ENCODE measurements at regions of chrX and their contacts with region 1.

Region 1: DNA sequence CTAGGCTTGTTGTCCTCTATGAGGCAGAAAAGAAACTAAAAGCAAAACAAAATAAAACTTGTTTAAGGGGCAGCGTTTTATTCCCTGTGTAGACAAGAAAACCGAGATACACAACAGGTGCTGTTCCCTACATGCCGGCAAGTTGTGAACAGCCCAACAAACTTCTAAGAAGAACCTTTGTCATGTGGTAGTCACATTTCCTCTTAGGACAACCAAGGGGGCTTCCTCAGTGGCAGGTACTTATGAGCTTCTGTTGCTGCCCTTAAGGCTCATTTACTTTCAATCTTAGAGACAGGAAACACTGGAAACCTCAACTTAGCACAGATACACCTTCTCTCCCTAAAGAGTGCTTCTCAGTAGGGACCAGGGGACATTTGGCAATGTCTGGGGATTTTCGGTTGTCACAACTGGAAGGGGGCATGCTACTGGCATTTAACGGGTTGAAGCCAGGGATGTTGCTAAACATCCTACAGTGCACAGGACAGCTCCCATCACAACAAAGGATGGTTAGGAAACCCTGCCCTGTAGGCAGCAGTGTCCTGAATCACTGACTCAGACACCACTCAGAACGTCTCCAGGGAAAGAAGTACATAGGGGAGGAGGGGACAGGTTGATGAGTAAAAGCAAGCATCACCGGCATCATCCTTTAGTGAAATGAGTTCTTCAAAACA is 111.0 kb downstream of the ASB9 start:
- DNase-seq: peak; percentile 51
- H3K4me3 Mint-ChIP-seq: peak overlapping the region; percentile 54
- H3K27ac Mint-ChIP-seq: peak overlapping the region; percentile 53
- H3K4me1 Mint-ChIP-seq: peaks cover 35% of the 10 kb centered on the region
- H3K27me3 Mint-ChIP-seq: no peaks in the 10 kb centered on the region

Region 2: GRCh38 chrX:14497184-14497666 is 661.6 kb before region 1 on chrX:
- CTCF ChIA-PET with region 1: no interaction called
- intact Hi-C with region 1: loop called (anchors 2 kb)
- DNase-seq: peak; percentile 14
- H3K4me3 Mint-ChIP-seq: peak overlapping the region; percentile 71
- H3K27ac Mint-ChIP-seq: peak overlapping the region; percentile 91
- H3K4me1 Mint-ChIP-seq: peaks cover 16% of the 10 kb centered on the region
- H3K27me3 Mint-ChIP-seq: no peaks in the 10 kb centered on the region